ENCODE measurements at regions of chr12 and their contacts with region 1.

Region 1: GRCh38 chr12:17992002-17992656 is 97.9 kb downstream of the RERGL start:
- DNase-seq: peak; percentile 20
- H3K4me3 ChIP-seq: no peak overlapping the region; a peak in 1 of 4 replicates
- H3K27ac ChIP-seq: no peak overlapping the region
- H3K4me1 ChIP-seq: no peaks in the 10 kb centered on the region
- H3K27me3 ChIP-seq: no peaks in the 10 kb centered on the region
- CTCF ChIP-seq: peak; percentile 91
- EP300 ChIP-seq: no peak
- RAD21 ChIP-seq: peak; percentile 61

Region 2: DNA sequence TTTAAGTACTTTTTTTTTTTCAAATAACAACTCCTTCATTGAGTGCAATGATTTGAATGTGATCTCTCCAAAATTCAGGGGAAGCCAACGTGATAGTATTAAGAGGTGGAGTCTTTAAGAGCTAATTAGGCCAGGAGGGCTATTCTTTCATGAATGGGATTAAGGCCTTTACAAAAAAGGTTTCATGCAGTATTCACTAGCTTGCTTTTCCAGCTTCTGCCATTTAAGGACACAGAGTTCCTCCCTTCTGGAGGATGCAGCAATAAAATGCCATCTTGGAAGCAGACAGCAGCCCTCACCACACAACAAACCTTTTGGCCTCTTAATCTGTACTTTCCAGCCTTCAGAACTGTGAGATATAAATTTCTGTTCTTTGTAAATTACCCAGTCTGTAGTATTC is 799.4 kb before region 1 on chr12:
- CTCF ChIA-PET with region 1: no interaction called
- POLR2A ChIA-PET with region 1: no interaction called
- DNase-seq: no peak
- H3K4me3 ChIP-seq: no peak overlapping the region
- H3K27ac ChIP-seq: no peak overlapping the region
- H3K4me1 ChIP-seq: no peaks in the 10 kb centered on the region
- H3K27me3 ChIP-seq: no peaks in the 10 kb centered on the region
- CTCF ChIP-seq: no peak
- EP300 ChIP-seq: no peak
- RAD21 ChIP-seq: no peak

Region 3: DNA sequence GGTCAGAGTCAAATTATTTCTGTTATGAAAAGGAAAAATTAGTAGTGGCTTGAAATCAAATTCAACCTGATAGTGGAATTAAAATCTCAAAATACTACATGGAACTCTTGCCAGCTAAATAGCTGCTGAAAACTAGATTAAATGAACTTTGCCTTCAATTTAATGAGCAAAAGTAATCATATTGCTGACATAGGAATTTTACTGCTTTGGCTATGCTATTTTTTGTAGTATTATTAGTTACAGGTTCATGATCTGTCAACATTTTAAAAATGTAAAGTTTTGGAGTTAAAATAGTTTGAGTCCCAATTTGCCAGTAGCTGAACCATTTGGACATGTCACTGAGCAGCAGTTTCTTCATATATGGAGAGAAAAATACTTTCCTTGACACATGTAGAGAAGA is 16.5 kb after region 1 on chr12:
- CTCF ChIA-PET with region 1: interaction called, 15 read pairs
- POLR2A ChIA-PET with region 1: no interaction called
- DNase-seq: no peak
- H3K4me3 ChIP-seq: no peak overlapping the region
- H3K27ac ChIP-seq: no peak overlapping the region
- H3K4me1 ChIP-seq: no peaks in the 10 kb centered on the region
- H3K27me3 ChIP-seq: no peaks in the 10 kb centered on the region
- CTCF ChIP-seq: no peak
- EP300 ChIP-seq: no peak
- RAD21 ChIP-seq: no peak

Region 4: DNA sequence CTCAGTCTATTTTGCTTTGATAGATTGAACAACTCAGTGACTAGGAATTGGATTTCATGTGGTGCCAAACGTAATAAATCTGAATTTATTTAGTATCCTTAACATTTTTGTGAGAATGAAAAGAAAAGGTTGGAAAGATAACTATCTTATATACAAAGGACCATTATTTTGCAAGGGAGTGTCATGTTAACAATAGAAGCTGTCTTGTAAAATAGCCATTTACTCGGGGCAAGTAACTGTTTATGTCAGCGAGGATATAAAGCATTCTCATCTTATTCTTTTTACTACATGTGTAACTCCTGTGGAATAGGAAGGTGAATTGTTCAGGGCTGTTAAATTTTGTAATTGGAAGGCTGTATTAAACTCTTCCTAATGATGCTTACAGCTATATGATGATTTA is 92.0 kb after region 1 on chr12:
- CTCF ChIA-PET with region 1: no interaction called
- POLR2A ChIA-PET with region 1: no interaction called
- DNase-seq: no peak
- H3K4me3 ChIP-seq: no peak overlapping the region
- H3K27ac ChIP-seq: no peak overlapping the region
- H3K4me1 ChIP-seq: no peaks in the 10 kb centered on the region
- H3K27me3 ChIP-seq: no peaks in the 10 kb centered on the region
- CTCF ChIP-seq: no peak
- EP300 ChIP-seq: no peak
- RAD21 ChIP-seq: no peak